ENCODE measurements at regions of chr4 and their contacts with region 1.

Region 1: GRCh38 chr4:102543030-102543928 is 42.1 kb downstream of the NFKB1 start:
- DNase-seq: no peak
- ATAC-seq: no peak
- H3K4me3 ChIP-seq: no peak overlapping the region
- H3K4me3 Mint-ChIP-seq: no peak overlapping the region
- H3K27ac ChIP-seq: no peak overlapping the region
- H3K27ac Mint-ChIP-seq: no peak overlapping the region
- H3K4me1 ChIP-seq: peaks cover 2 to 6% of the 10 kb centered on the region in 2 experiments
- H3K4me1 Mint-ChIP-seq: peaks cover 46 to 66% (median 60%) of the 10 kb centered on the region in 3 donors
- H3K27me3 ChIP-seq: no peaks in the 10 kb centered on the region
- H3K27me3 Mint-ChIP-seq: no peaks in the 10 kb centered on the region

Region 2: GRCh38 chr4:102404431-102405028 is 138.7 kb before region 1 on chr4:
- CTCF ChIA-PET with region 1: no interaction called
- POLR2A ChIA-PET with region 1: no interaction called
- DNase-seq: no peak
- ATAC-seq: no peak
- H3K4me3 ChIP-seq: no peak overlapping the region
- H3K4me3 Mint-ChIP-seq: no peak overlapping the region
- H3K27ac ChIP-seq: no peak overlapping the region
- H3K27ac Mint-ChIP-seq: no peak overlapping the region
- H3K4me1 ChIP-seq: no peaks in the 10 kb centered on the region
- H3K4me1 Mint-ChIP-seq: no peaks in the 10 kb centered on the region
- H3K27me3 ChIP-seq: no peaks in the 10 kb centered on the region
- H3K27me3 Mint-ChIP-seq: no peaks in the 10 kb centered on the region

Region 3: GRCh38 chr4:102533205-102533747 is 10.0 kb before region 1 on chr4:
- CTCF ChIA-PET with region 1: interaction called, 3 read pairs
- POLR2A ChIA-PET with region 1: interaction called, 7 to 16 read pairs
- DNase-seq: no peak
- ATAC-seq: no peak
- H3K4me3 ChIP-seq: no peak overlapping the region
- H3K4me3 Mint-ChIP-seq: peak overlapping the region in 1 of 3 donors; percentile 25
- H3K27ac ChIP-seq: no peak overlapping the region
- H3K27ac Mint-ChIP-seq: peak overlapping the region in 1 of 2 donors; percentile 14
- H3K4me1 ChIP-seq: peaks cover 3 to 13% of the 10 kb centered on the region in 2 experiments
- H3K4me1 Mint-ChIP-seq: peaks cover 68 to 71% (median 70%) of the 10 kb centered on the region in 3 donors
- H3K27me3 ChIP-seq: no peaks in the 10 kb centered on the region
- H3K27me3 Mint-ChIP-seq: no peaks in the 10 kb centered on the region

Region 4: DNA sequence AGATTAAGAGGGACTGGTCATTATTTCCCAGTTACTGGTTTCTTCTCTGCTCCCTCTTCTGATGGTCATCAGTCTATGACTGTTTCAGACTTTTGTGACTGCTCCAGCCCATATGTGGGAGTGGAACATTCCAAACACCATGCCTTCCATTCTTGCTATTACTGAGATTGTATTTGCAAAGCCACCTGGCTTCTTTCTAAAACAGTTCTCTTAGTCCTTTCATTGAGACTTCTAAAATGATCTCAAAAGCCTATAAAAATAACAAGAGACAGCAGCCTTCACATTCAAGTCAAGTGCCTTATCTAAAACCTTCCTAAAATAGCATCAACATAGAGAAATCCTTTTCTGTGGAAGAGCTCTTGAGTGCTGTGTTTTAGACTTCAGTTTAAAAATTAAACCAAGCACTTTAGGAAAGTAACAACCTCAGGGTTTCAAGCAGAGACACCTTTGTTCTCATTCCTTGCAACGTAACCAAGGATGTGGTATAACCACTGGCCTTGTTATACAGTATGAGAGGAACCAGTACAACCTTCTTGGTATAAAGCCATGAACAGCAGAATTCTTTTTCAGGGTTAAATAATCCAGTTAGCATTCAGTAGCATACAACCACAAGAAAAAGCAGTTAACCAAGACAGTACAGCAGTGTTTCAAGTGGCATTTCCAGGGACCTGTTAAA is 54.9 kb after region 1 on chr4:
- CTCF ChIA-PET with region 1: no interaction called
- POLR2A ChIA-PET with region 1: no interaction called
- DNase-seq: peak in 10 of 35 experiments; percentile 10 to 64 (median 24)
- ATAC-seq: peak; percentile 89 to 93 (median 92)
- H3K4me3 ChIP-seq: no peak overlapping the region
- H3K4me3 Mint-ChIP-seq: peak overlapping the region in 2 of 3 donors; percentile 45 to 46
- H3K27ac ChIP-seq: peak overlapping the region; percentile 74
- H3K27ac Mint-ChIP-seq: peak overlapping the region; percentile 91 to 95
- H3K4me1 ChIP-seq: peaks cover 30 to 33% of the 10 kb centered on the region in 2 experiments
- H3K4me1 Mint-ChIP-seq: peaks cover 68 to 78% (median 77%) of the 10 kb centered on the region in 3 donors
- H3K27me3 ChIP-seq: no peaks in the 10 kb centered on the region
- H3K27me3 Mint-ChIP-seq: no peaks in the 10 kb centered on the region